WTC11 (cell line): ENCODE measurements at regions of chr16 and their contacts with region 1.

Region 1: DNA sequence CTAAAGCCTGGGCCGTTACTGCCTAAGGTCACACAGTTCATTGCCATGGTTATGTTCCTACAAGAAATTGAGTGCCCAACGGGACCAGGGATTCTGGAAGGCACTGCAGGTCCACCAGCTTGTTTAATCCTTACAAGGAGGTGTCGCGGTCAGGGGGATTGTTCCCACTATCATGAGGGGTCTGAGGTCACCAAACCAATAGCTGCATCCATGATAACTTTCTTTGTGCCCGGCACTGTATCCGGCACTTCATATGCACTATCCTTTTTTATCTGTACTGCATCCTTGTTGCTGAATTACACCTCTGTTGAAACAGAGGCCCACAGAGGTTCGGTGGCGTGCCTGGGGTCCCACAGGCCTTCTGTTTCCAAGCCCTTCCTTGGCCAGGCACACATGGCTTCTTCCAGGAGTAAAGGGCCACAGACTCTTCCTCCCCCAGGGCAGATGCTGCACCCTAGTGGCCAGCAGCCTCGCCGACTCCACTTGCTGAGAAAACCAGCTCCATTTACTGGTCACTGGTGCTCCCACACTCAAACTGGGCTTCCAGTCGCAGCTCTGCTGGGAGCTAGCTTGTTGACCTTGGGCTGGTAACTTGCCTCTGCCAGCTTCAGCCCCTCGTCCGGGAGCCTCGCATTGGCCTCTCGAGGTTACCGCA is 82.0 kb upstream of the PLCG2 start:
- DNase-seq: peak; percentile 84
- ATAC-seq: peak; percentile 81
- H3K4me3 Mint-ChIP-seq: no peak overlapping the region
- H3K27ac Mint-ChIP-seq: peak overlapping the region; percentile 68; the same call in 1 of the 2 replicates
- H3K4me1 Mint-ChIP-seq: no peaks in the 10 kb centered on the region
- H3K27me3 Mint-ChIP-seq: no peaks in the 10 kb centered on the region
- CTCF ChIP-seq: peak; percentile 50; the same call in 1 of the 2 replicates

Region 2: GRCh38 chr16:80974649-80975376 is 722.3 kb before region 1 on chr16:
- CTCF ChIA-PET with region 1: no interaction called
- POLR2A ChIA-PET with region 1: no interaction called
- DNase-seq: no peak
- ATAC-seq: 0 out of 2 replicates have a peak, but pooled peaks have one; percentile 26
- H3K4me3 Mint-ChIP-seq: no peak overlapping the region
- H3K27ac Mint-ChIP-seq: no peak overlapping the region; the same call in 1 of the 2 replicates
- H3K4me1 Mint-ChIP-seq: peaks cover 4% of the 10 kb centered on the region; the same call in 1 of the 2 replicates
- H3K27me3 Mint-ChIP-seq: no peaks in the 10 kb centered on the region
- CTCF ChIP-seq: 0 out of 2 replicates have a peak, but pooled peaks have one; percentile 38

Region 3: DNA sequence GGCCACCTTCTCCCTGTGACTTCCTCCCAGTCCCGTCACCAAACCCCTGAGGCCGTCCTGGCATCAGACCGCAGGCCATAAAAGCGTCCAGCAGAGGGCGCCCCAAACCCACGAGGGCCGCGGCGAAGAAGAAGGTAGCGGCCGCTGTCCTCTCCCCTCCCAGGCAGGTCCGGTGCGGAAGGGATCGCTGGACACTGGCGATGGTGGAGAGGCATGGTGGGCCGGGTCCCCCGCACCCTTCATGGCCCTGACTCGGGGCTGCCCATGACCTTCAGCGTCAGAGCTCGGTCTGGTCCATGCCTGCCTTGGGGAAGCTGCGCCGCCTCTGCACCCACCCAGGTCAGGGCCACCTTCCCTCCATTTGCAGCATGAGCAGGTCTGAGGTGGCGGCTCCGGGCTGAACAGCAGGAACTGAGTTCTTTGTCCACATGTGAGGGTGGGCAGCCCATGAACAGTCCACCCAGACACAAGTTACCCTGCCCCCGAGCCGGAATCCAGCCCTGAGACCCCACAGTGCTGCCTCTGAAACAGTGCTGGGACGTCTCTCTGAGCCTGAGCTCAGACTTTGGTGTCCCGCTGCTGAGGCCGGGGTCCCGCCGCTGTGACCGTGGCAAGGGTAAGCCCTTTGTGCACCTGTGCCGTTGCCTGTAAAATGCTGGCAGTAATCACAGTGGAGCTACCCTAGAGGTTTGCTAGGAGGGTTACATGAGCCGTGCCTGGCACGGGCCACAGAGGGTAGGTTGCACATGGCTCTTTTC is 293.3 kb before region 1 on chr16:
- CTCF ChIA-PET with region 1: interaction called, 14 read pairs
- POLR2A ChIA-PET with region 1: no interaction called
- DNase-seq: peak; percentile 94
- ATAC-seq: peak; percentile 85
- H3K4me3 Mint-ChIP-seq: peak overlapping the region; percentile 35
- H3K27ac Mint-ChIP-seq: no peak overlapping the region
- H3K4me1 Mint-ChIP-seq: no peaks in the 10 kb centered on the region
- H3K27me3 Mint-ChIP-seq: peaks cover 6% of the 10 kb centered on the region
- CTCF ChIP-seq: peak; percentile 96

Region 4: DNA sequence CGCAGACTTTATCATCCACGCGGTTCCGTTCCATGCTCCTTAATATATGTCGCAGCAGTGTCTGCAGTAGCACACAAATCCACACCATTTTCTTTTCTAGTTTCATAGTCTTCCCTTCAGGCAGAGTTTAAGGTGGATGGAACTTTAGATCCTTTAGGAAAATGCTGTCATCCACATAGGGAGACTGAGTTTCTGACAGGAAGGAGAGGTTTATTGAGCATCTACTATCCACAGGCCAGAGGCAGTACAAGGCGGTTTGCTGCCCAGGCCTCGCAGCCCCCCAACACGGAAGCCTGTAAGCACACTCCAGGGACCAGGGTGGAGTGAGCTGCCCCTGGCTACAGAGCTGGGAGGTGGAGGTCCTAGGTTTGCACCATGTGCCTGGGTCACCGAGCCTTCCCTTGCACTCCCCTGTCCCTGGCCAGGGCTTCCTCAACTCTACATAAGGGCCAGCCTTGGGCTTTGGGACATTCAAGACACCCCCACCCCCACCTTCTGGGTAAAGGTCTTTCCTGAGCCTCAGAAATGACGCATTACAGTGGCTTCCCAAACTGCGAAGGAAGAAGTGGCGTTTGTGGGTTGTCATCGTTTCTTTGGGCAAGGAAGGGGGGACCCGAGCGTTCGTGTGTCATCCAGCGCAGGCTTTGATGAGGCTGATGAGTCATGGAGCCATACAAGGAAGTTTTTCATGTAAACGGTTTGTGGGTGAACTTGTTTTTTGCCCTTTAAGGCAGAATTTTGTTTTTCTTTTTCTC is 64.5 kb before region 1 on chr16:
- CTCF ChIA-PET with region 1: interaction called, 19 read pairs
- POLR2A ChIA-PET with region 1: no interaction called
- DNase-seq: no peak
- ATAC-seq: no peak
- H3K4me3 Mint-ChIP-seq: no peak overlapping the region
- H3K27ac Mint-ChIP-seq: peak overlapping the region; percentile 78
- H3K4me1 Mint-ChIP-seq: peaks cover 62% of the 10 kb centered on the region
- H3K27me3 Mint-ChIP-seq: no peaks in the 10 kb centered on the region; the same call in 1 of the 2 replicates
- CTCF ChIP-seq: no peak

Region 5: GRCh38 chr16:81686391-81687130 is 10.5 kb before region 1 on chr16:
- CTCF ChIA-PET with region 1: interaction called, 10 read pairs
- POLR2A ChIA-PET with region 1: interaction called, 3 read pairs
- DNase-seq: no peak
- ATAC-seq: no peak
- H3K4me3 Mint-ChIP-seq: no peak overlapping the region
- H3K27ac Mint-ChIP-seq: peak overlapping the region; percentile 36; the same call in 1 of the 2 replicates
- H3K4me1 Mint-ChIP-seq: peaks cover 11% of the 10 kb centered on the region
- H3K27me3 Mint-ChIP-seq: no peaks in the 10 kb centered on the region
- CTCF ChIP-seq: no peak

Region 6: DNA sequence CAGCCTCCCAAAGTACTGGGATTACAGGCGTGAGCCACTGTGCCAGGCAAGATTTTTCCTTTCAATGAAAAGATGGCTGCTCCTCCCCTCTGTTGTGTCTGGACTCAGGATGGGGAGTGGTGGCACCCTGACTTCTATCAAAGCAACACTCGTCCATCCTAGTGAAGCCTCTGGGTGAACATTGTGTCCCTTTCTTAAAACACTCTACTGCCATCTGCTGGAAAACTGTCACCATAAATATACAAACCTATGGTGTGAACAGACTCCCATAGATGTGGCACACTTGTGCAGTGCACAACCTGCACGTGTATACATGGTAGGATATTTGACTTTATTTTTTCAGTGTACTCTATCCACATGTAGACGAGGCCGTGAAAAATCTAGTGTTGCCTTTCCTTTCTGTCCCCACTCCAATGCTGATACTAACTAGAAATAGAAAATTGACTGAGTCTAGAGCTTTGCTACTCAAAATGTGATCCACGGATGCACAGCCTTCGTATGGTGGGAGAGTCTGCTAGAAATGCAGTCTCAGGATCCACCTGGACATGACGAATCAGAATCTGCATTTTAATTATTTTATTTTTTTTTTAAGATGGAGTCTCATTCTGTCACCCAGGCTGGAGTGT is 26.1 kb after region 1 on chr16:
- CTCF ChIA-PET with region 1: interaction called, 11 read pairs
- POLR2A ChIA-PET with region 1: no interaction called
- DNase-seq: no peak
- ATAC-seq: peak; percentile 84
- H3K4me3 Mint-ChIP-seq: no peak overlapping the region
- H3K27ac Mint-ChIP-seq: no peak overlapping the region
- H3K4me1 Mint-ChIP-seq: peaks cover 27% of the 10 kb centered on the region
- H3K27me3 Mint-ChIP-seq: no peaks in the 10 kb centered on the region
- CTCF ChIP-seq: no peak; the same call in 1 of the 2 replicates

Region 7: GRCh38 chr16:81841722-81842121 is 144.6 kb after region 1 on chr16:
- CTCF ChIA-PET with region 1: no interaction called
- POLR2A ChIA-PET with region 1: no interaction called
- DNase-seq: no peak
- ATAC-seq: no peak
- H3K4me3 Mint-ChIP-seq: no peak overlapping the region
- H3K27ac Mint-ChIP-seq: no peak overlapping the region
- H3K4me1 Mint-ChIP-seq: peaks cover 9% of the 10 kb centered on the region
- H3K27me3 Mint-ChIP-seq: no peaks in the 10 kb centered on the region
- CTCF ChIP-seq: no peak